ENCODE measurements at regions of chr5 and their contacts with region 1.

Region 1: GRCh38 chr5:77775790-77776553 is at the start of gene TBCA:
- DNase-seq: peak; percentile 84 to 97 (median 93)
- ATAC-seq: peak; percentile 80
- H3K4me3 ChIP-seq: peak within 1 kb of the TSS; percentile 65 to 80
- H3K4me3 Mint-ChIP-seq: peak within 1 kb of the TSS; percentile 88
- H3K27ac ChIP-seq: peak within 1 kb of the TSS; percentile 91 to 96
- H3K27ac Mint-ChIP-seq: peak within 1 kb of the TSS; percentile 98
- H3K4me1 ChIP-seq: peaks cover 41% of the 10 kb centered on the region
- H3K4me1 Mint-ChIP-seq: peaks cover 51% of the 10 kb centered on the region
- H3K27me3 ChIP-seq: no peaks in the 10 kb centered on the region
- H3K27me3 Mint-ChIP-seq: no peaks in the 10 kb centered on the region
- CTCF ChIP-seq: no peak
- total RNA-seq, gene TBCA: 72.2 to 74.6 TPM

Region 2: GRCh38 chr5:77030097-77031071 is 745.6 kb before region 1 on chr5 and contains the start of gene AGGF1:
- CTCF ChIA-PET with region 1: no interaction called
- POLR2A ChIA-PET with region 1: no interaction called
- intact Hi-C with region 1: loop called in 1 of 2 experiments (anchors 5 kb)
- DNase-seq: peak; percentile 78 to 95 (median 92)
- ATAC-seq: peak; percentile 98
- H3K4me3 ChIP-seq: peak within 1 kb of the TSS; percentile 84 to 94
- H3K4me3 Mint-ChIP-seq: peak within 1 kb of the TSS; percentile 90
- H3K27ac ChIP-seq: peak within 1 kb of the TSS; percentile 69 to 85
- H3K27ac Mint-ChIP-seq: peak within 1 kb of the TSS; percentile 94
- H3K4me1 ChIP-seq: peaks cover 21% of the 10 kb centered on the region
- H3K4me1 Mint-ChIP-seq: peaks cover 43% of the 10 kb centered on the region
- H3K27me3 ChIP-seq: no peaks in the 10 kb centered on the region
- H3K27me3 Mint-ChIP-seq: no peaks in the 10 kb centered on the region
- CTCF ChIP-seq: no peak
- total RNA-seq, gene AGGF1: 14.8 to 14.9 TPM

Region 3: DNA sequence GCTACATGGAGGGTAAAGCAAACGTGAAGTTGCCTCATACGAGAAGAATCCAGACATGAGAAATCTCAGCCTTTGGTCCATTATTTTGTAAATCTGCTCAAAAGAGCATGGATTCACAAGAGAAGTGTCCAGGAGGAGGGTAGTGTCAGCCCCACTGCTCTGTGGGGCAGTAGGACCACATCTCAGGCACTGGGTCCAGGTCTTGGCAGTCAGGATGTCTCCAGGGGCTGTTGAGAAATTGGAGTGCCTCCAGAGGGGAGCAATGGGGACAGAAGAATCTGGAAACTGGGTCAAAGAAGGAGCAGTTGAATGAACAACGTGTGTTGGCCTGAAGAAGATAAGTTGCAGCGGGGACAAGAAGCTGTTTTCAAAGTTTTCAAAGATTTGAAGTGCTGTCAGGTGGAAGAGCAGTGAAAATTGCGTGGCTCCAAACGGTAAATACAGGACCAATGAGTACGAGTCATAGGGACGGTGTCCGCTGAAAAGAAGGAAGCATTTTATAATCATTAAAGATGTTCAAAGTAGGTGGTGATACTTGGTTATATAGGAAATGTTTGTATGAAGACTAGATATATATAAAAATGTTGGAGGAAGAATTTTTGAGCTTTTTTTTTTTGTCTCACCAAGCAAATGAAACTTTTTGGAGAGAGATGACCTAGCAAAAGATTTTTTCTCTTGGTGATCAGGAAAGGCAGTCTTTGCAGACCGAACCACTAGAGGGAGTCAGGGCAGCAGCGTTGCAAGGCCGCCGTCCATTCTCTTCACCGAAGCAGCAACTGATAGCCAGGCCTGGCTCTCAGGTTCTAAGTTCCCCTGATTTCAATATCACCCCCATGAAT is 631.8 kb before region 1 on chr5:
- CTCF ChIA-PET with region 1: no interaction called
- POLR2A ChIA-PET with region 1: no interaction called
- intact Hi-C with region 1: loop called in 1 of 2 experiments (anchors 10 kb)
- DNase-seq: peak in 8 of 9 experiments; percentile 27 to 76 (median 62)
- ATAC-seq: peak; percentile 77
- H3K4me3 ChIP-seq: no peak overlapping the region
- H3K4me3 Mint-ChIP-seq: no peak overlapping the region
- H3K27ac ChIP-seq: no peak overlapping the region
- H3K27ac Mint-ChIP-seq: no peak overlapping the region
- H3K4me1 ChIP-seq: no peaks in the 10 kb centered on the region
- H3K4me1 Mint-ChIP-seq: peaks cover 2% of the 10 kb centered on the region
- H3K27me3 ChIP-seq: no peaks in the 10 kb centered on the region
- H3K27me3 Mint-ChIP-seq: no peaks in the 10 kb centered on the region
- CTCF ChIP-seq: peak; percentile 73

Region 4: GRCh38 chr5:77645158-77645994 is 130.6 kb before region 1 on chr5:
- CTCF ChIA-PET with region 1: interaction called, 3 read pairs
- POLR2A ChIA-PET with region 1: no interaction called
- intact Hi-C with region 1: loop called (anchors 5 kb)
- DNase-seq: peak in 6 of 9 experiments; percentile 16 to 62 (median 48)
- ATAC-seq: peak; percentile 78
- H3K4me3 ChIP-seq: peak overlapping the region; percentile 25 to 36
- H3K4me3 Mint-ChIP-seq: peak overlapping the region; percentile 60
- H3K27ac ChIP-seq: no peak overlapping the region
- H3K27ac Mint-ChIP-seq: no peak overlapping the region
- H3K4me1 ChIP-seq: peaks cover 15% of the 10 kb centered on the region
- H3K4me1 Mint-ChIP-seq: peaks cover 22% of the 10 kb centered on the region
- H3K27me3 ChIP-seq: peaks cover 50 to 58% of the 10 kb centered on the region in 2 experiments
- H3K27me3 Mint-ChIP-seq: peaks cover 82% of the 10 kb centered on the region
- CTCF ChIP-seq: no peak

Region 5: DNA sequence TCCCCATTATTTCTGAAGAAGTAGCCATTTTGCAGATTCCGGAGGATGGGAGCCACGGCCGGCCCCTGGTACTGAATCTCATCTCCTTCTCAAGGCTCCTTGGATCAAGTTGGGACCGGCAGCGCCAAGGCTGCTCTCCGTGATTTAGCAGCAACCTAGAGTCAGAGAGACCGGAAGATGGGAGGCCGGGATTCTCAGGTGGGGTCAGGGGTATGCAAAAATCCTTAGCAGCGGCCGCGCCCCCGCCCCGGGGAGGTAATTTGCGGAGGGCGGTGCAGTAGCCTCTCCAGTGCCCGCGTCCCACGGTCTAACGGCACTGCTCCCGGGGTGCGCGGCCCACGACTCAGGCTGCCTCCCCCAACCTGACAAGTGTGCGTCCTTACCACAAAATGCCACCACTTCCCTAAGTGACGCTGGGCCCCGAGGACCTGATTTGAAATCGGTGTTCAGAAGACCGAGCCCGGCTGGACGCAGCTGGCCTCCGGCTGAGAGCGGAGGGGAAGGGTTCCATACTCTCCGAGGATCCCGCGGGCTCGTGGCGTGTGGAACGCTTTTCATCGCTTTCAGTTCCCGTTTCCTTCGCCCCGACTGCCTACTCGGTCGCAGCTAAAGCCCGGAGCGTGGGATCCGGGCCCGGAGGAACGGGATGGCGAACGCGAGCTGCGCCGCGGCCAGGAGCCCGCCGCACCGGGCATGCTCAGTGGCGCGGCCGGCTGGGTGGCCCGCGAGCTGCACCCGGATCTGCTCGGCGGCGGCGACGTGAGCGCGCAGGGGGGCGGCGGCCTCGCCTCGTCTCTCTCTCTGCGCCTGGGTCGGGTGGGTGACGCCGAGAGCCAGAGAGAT is 584.1 kb after region 1 on chr5 and contains the start of gene SCAMP1:
- CTCF ChIA-PET with region 1: no interaction called
- POLR2A ChIA-PET with region 1: no interaction called
- intact Hi-C with region 1: loop called (anchors 1 to 5 kb)
- DNase-seq: peak; percentile 88 to 96 (median 91)
- ATAC-seq: peak; percentile 78
- H3K4me3 ChIP-seq: peak within 1 kb of the TSS; percentile 95
- H3K4me3 Mint-ChIP-seq: peak within 1 kb of the TSS; percentile 86
- H3K27ac ChIP-seq: peak within 1 kb of the TSS; percentile 92 to 97
- H3K27ac Mint-ChIP-seq: peak within 1 kb of the TSS; percentile 96
- H3K4me1 ChIP-seq: peaks cover 27% of the 10 kb centered on the region
- H3K4me1 Mint-ChIP-seq: peaks cover 53% of the 10 kb centered on the region
- H3K27me3 ChIP-seq: no peaks in the 10 kb centered on the region
- H3K27me3 Mint-ChIP-seq: no peaks in the 10 kb centered on the region
- CTCF ChIP-seq: no peak
- total RNA-seq, gene SCAMP1: 19.2 to 20.3 TPM

Region 6: GRCh38 chr5:79235634-79236363 is 1459.8 kb after region 1 on chr5 and contains the start of gene JMY:
- CTCF ChIA-PET with region 1: no interaction called
- POLR2A ChIA-PET with region 1: no interaction called
- intact Hi-C with region 1: loop called in 1 of 2 experiments (anchors 10 kb)
- DNase-seq: peak; percentile 72 to 94 (median 85)
- ATAC-seq: peak; percentile 86
- H3K4me3 ChIP-seq: peak within 1 kb of the TSS; percentile 79 to 81
- H3K4me3 Mint-ChIP-seq: peak within 1 kb of the TSS; percentile 97
- H3K27ac ChIP-seq: peak within 1 kb of the TSS; percentile 91 to 98
- H3K27ac Mint-ChIP-seq: peak within 1 kb of the TSS; percentile 96
- H3K4me1 ChIP-seq: peaks cover 28% of the 10 kb centered on the region
- H3K4me1 Mint-ChIP-seq: peaks cover 34% of the 10 kb centered on the region
- H3K27me3 ChIP-seq: no peaks in the 10 kb centered on the region
- H3K27me3 Mint-ChIP-seq: no peaks in the 10 kb centered on the region
- CTCF ChIP-seq: no peak
- total RNA-seq, gene JMY: 104 TPM

Region 7: GRCh38 chr5:79612667-79613198 is 1836.8 kb after region 1 on chr5:
- CTCF ChIA-PET with region 1: no interaction called
- POLR2A ChIA-PET with region 1: interaction called, 3 read pairs
- intact Hi-C with region 1: loop called in 1 of 2 experiments (anchors 5 kb)
- DNase-seq: no peak
- ATAC-seq: no peak
- H3K4me3 ChIP-seq: peak overlapping the region; percentile 71 to 97
- H3K4me3 Mint-ChIP-seq: peak overlapping the region; percentile 96
- H3K27ac ChIP-seq: peak overlapping the region; percentile 89 to 91
- H3K27ac Mint-ChIP-seq: peak overlapping the region; percentile 98
- H3K4me1 ChIP-seq: peaks cover 26% of the 10 kb centered on the region
- H3K4me1 Mint-ChIP-seq: peaks cover 39% of the 10 kb centered on the region
- H3K27me3 ChIP-seq: no peaks in the 10 kb centered on the region
- H3K27me3 Mint-ChIP-seq: peaks cover 9% of the 10 kb centered on the region
- CTCF ChIP-seq: no peak